Gastrocnemius medialis (tissue), 4 donors: ENCODE measurements at regions of chr22 and their contacts with region 1.

Region 1: GRCh38 chr22:18070556-18071306 is 7.1 kb upstream of the PEX26 start:
- DNase-seq: no peak
- ATAC-seq: no peak
- H3K4me3 ChIP-seq: no peak overlapping the region
- H3K27ac ChIP-seq: no peak overlapping the region
- H3K4me1 ChIP-seq: peaks cover 15 to 20% of the 10 kb centered on the region in 2 donors
- H3K27me3 ChIP-seq: no peaks in the 10 kb centered on the region
- CTCF ChIP-seq: peak in 1 of 5 experiments; percentile 16
- POLR2A ChIP-seq: no peak

Region 2: GRCh38 chr22:18001040-18001893 is 69.5 kb before region 1 on chr22:
- in situ Hi-C with region 1: loop called in 3 of 4 experiments (anchors 5 to 10 kb)
- intact Hi-C with region 1: no loop called
- DNase-seq: peak; percentile 84 to 92
- ATAC-seq: peak; percentile 95 to 96
- H3K4me3 ChIP-seq: peak overlapping the region; percentile 62 to 89 (median 76)
- H3K27ac ChIP-seq: peak overlapping the region; percentile 85 to 95 (median 92)
- H3K4me1 ChIP-seq: peaks cover 15 to 24% of the 10 kb centered on the region in 2 donors
- H3K27me3 ChIP-seq: no peaks in the 10 kb centered on the region
- CTCF ChIP-seq: peak; percentile 46 to 82 (median 79)
- POLR2A ChIP-seq: peak; percentile 84 to 89